ENCODE measurements at regions of chr6 and their contacts with region 1.

Region 1: DNA sequence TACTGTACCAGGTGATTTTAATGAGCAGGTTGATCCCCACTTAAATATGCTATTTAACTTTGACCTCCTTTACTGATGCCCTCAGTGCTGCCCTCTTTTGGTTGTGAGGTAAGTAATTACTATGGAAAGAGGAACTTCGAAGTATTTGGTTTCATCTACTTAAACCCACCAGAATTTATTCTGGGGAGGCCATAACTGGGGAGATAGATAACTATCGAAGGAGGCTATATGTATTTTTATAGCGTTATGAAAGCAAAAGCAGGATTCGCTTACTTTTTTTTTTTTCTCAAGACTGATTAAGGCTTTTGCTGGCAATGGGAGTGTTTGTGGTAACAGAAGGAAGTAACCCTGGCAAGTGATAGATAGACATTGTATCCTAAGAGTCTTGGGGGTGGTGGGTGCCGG is 168.9 kb upstream of the CENPW start:
- DNase-seq: peak; percentile 56
- H3K4me3 ChIP-seq: no peak overlapping the region
- H3K27ac ChIP-seq: no peak overlapping the region
- H3K4me1 ChIP-seq: no peaks in the 10 kb centered on the region
- H3K27me3 ChIP-seq: no peaks in the 10 kb centered on the region
- CTCF ChIP-seq: peak; percentile 73

Region 2: DNA sequence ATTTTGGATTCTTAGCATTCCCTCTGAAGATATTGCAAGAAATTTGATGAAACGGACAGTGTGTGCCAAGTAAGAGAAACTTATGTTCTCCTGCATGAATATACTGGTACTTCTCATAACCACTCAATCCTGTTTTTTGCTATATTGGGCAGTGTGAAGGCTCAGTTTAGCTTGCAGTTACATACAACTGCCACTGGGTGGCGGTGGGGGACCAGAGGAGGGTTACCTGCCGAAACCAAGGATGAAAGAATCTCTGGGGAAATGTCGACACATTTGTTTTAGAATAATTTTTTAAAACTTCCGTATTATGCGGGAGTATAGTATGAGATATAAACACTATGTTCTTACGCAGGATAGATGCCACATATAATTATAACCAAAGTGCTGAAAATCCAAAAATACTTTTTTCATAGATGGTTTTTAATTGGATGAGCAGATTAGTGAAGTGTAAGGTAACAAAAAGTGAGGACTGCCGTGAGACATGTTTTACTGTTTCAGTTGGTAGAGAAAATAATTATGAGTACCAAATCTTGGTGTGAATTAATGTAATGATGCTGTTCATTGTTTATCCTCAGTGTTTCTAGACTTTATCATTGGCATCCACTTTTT is 174.9 kb before region 1 on chr6:
- CTCF ChIA-PET with region 1: no interaction called
- POLR2A ChIA-PET with region 1: no interaction called
- intact Hi-C with region 1: loop called (anchors 2 kb)
- DNase-seq: peak; percentile 82
- H3K4me3 ChIP-seq: no peak overlapping the region
- H3K27ac ChIP-seq: no peak overlapping the region
- H3K4me1 ChIP-seq: peaks cover 5% of the 10 kb centered on the region
- H3K27me3 ChIP-seq: no peaks in the 10 kb centered on the region
- CTCF ChIP-seq: peak; percentile 98

Region 3: GRCh38 chr6:126033696-126034095 is 137.3 kb before region 1 on chr6:
- CTCF ChIA-PET with region 1: no interaction called
- POLR2A ChIA-PET with region 1: no interaction called
- intact Hi-C with region 1: loop called (anchors 1 kb)
- DNase-seq: peak; percentile 84
- H3K4me3 ChIP-seq: no peak overlapping the region
- H3K27ac ChIP-seq: no peak overlapping the region
- H3K4me1 ChIP-seq: no peaks in the 10 kb centered on the region
- H3K27me3 ChIP-seq: no peaks in the 10 kb centered on the region
- CTCF ChIP-seq: peak; percentile 71

Region 4: GRCh38 chr6:126054258-126054702 is 116.7 kb before region 1 on chr6:
- CTCF ChIA-PET with region 1: interaction called, 10 read pairs
- POLR2A ChIA-PET with region 1: no interaction called
- intact Hi-C with region 1: no loop called
- DNase-seq: no peak
- H3K4me3 ChIP-seq: no peak overlapping the region
- H3K27ac ChIP-seq: no peak overlapping the region
- H3K4me1 ChIP-seq: no peaks in the 10 kb centered on the region
- H3K27me3 ChIP-seq: no peaks in the 10 kb centered on the region
- CTCF ChIP-seq: no peak